WTC11 (cell line): ENCODE measurements at regions of chr11 and their contacts with region 1.

Region 1: GRCh38 chr11:62542750-62543567 is 3.6 kb downstream of the AHNAK start:
- DNase-seq: peak; percentile 90
- ATAC-seq: peak; percentile 51
- H3K4me3 Mint-ChIP-seq: peak overlapping the region; percentile 52
- H3K27ac Mint-ChIP-seq: no peak overlapping the region
- H3K4me1 Mint-ChIP-seq: peaks cover 46% of the 10 kb centered on the region
- H3K27me3 Mint-ChIP-seq: peaks cover 65% of the 10 kb centered on the region
- CTCF ChIP-seq: peak; percentile 99

Region 2: DNA sequence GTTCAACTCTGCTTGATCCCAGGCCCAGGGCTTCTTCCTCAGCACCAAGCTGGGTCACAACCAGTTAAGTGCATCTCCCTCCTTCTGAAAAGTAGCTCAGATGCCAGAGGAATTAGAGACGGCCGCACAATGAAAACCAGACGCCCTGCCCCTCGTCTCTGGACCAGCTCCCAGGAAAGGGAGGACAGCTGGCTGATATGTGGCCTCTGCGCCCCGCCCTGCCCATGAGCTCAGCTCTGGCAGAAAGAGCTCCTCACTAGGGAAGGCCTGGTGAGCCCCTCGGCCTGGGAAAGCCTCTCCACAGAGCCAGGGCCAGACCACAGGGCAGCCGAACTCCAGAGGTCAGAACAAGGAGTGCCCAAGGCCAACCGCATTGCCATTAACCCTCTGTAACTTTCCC is 142.2 kb before region 1 on chr11:
- CTCF ChIA-PET with region 1: interaction called, 279 read pairs
- POLR2A ChIA-PET with region 1: interaction called, 6 read pairs
- DNase-seq: no peak
- ATAC-seq: no peak
- H3K4me3 Mint-ChIP-seq: no peak overlapping the region
- H3K27ac Mint-ChIP-seq: no peak overlapping the region
- H3K4me1 Mint-ChIP-seq: peaks cover 24% of the 10 kb centered on the region
- H3K27me3 Mint-ChIP-seq: peaks cover 3% of the 10 kb centered on the region; the same call in 1 of the 2 replicates
- CTCF ChIP-seq: no peak

Region 3: GRCh38 chr11:62435846-62436660 is 106.9 kb before region 1 on chr11:
- CTCF ChIA-PET with region 1: interaction called, 43 read pairs
- POLR2A ChIA-PET with region 1: interaction called, 4 read pairs
- DNase-seq: no peak
- ATAC-seq: no peak
- H3K4me3 Mint-ChIP-seq: no peak overlapping the region
- H3K27ac Mint-ChIP-seq: no peak overlapping the region
- H3K4me1 Mint-ChIP-seq: peaks cover 6% of the 10 kb centered on the region
- H3K27me3 Mint-ChIP-seq: no peaks in the 10 kb centered on the region
- CTCF ChIP-seq: no peak

Region 4: DNA sequence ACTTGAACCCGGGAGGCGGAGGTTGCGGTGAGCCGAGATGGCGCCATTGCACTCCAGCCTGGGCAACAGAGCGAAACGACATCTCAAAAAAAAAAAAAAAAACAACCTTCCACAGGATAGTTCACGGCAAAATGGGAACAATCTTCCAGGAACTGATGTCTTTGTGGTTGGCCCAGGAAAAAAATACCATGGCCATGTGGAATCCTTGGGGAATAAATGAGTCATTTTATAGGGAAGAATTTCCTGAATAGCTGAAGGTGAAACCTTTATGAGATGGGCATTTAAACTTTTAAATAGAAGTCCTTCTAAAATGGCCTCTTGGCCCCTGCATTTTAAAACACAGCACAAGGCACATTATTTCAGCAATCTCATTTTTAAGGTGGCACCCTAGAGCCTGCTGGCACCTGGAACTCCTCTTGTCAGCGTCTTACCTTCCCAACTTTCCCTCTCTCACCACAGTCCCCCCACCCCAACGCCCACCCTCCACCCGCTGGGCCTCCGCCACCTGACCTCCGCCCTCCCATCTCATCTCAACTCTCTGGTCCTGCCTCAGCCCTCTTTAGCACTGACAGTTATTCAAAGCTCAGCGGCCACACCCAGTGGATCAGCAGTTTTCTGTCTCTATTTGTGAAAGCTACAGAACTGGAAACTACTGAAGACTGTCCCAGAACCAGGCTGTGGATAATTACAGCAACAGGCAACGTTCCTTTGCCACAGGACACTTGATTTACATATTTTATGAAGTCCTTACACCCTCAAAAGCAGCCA is 81.0 kb before region 1 on chr11:
- CTCF ChIA-PET with region 1: interaction called, 85 read pairs
- POLR2A ChIA-PET with region 1: no interaction called
- DNase-seq: no peak
- ATAC-seq: no peak
- H3K4me3 Mint-ChIP-seq: no peak overlapping the region
- H3K27ac Mint-ChIP-seq: no peak overlapping the region
- H3K4me1 Mint-ChIP-seq: peaks cover 2% of the 10 kb centered on the region; the same call in 1 of the 2 replicates
- H3K27me3 Mint-ChIP-seq: no peaks in the 10 kb centered on the region
- CTCF ChIP-seq: no peak

Region 5: GRCh38 chr11:62487738-62488551 is 55.0 kb before region 1 on chr11:
- CTCF ChIA-PET with region 1: interaction called, 27 read pairs
- POLR2A ChIA-PET with region 1: interaction called, 3 read pairs
- DNase-seq: no peak
- ATAC-seq: no peak
- H3K4me3 Mint-ChIP-seq: no peak overlapping the region
- H3K27ac Mint-ChIP-seq: no peak overlapping the region
- H3K4me1 Mint-ChIP-seq: no peaks in the 10 kb centered on the region
- H3K27me3 Mint-ChIP-seq: no peaks in the 10 kb centered on the region; the same call in 1 of the 2 replicates
- CTCF ChIP-seq: no peak

Region 6: GRCh38 chr11:62514151-62514550 is 28.8 kb before region 1 on chr11:
- CTCF ChIA-PET with region 1: interaction called, 177 read pairs
- POLR2A ChIA-PET with region 1: interaction called, 3 read pairs
- DNase-seq: no peak
- ATAC-seq: no peak
- H3K4me3 Mint-ChIP-seq: no peak overlapping the region
- H3K27ac Mint-ChIP-seq: no peak overlapping the region
- H3K4me1 Mint-ChIP-seq: no peaks in the 10 kb centered on the region
- H3K27me3 Mint-ChIP-seq: peaks cover 2% of the 10 kb centered on the region; the same call in 1 of the 2 replicates
- CTCF ChIP-seq: no peak

Region 7: DNA sequence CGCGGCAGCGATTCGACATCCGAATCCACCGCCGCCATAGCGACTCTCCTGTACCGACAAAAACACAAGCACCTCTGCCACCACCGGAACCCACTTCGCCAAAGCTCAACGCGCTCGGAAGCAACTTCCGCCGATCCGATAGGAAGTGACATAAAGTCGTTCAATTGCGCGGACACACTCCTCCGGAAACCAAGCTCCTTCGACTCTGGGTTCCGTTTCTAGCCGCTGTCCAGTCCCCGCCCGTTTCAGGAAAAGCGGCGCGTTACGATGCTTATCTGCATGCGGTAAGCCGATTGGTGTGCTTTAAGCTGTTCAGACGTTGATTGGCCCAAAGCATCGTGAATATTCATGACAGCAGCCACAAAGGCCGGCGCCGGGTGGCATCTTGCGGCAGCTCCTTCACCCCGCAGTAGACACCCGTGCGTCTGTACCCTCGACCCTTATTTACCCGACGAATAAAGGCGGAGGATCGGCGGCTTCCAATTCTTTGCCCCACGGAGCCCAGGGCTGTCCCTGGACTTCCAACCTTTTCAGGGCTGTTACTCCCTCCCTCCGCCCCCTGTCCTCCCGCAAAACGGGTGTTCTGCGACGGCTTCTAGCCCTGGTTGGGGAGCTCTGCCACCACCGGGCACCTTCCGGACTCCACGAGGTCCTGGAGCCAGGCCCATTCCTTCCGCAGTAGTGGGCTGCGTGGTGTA is 48.6 kb after region 1 on chr11 and contains the start of gene TUT1:
- CTCF ChIA-PET with region 1: interaction called, 23 read pairs
- POLR2A ChIA-PET with region 1: interaction called, 9 read pairs
- DNase-seq: peak; percentile 96
- ATAC-seq: peak; percentile 89
- H3K4me3 Mint-ChIP-seq: peak within 1 kb of the TSS; percentile 99
- H3K27ac Mint-ChIP-seq: peak within 1 kb of the TSS; percentile 91
- H3K4me1 Mint-ChIP-seq: peaks cover 19% of the 10 kb centered on the region
- H3K27me3 Mint-ChIP-seq: no peaks in the 10 kb centered on the region; the same call in 1 of the 2 replicates
- CTCF ChIP-seq: no peak
- total RNA-seq, gene TUT1: 35.3 to 40.0 TPM (median 37.3 TPM) in 3 replicates